A673 (cell line): ENCODE measurements at regions of chr6 and their contacts with region 1.

Region 1: DNA sequence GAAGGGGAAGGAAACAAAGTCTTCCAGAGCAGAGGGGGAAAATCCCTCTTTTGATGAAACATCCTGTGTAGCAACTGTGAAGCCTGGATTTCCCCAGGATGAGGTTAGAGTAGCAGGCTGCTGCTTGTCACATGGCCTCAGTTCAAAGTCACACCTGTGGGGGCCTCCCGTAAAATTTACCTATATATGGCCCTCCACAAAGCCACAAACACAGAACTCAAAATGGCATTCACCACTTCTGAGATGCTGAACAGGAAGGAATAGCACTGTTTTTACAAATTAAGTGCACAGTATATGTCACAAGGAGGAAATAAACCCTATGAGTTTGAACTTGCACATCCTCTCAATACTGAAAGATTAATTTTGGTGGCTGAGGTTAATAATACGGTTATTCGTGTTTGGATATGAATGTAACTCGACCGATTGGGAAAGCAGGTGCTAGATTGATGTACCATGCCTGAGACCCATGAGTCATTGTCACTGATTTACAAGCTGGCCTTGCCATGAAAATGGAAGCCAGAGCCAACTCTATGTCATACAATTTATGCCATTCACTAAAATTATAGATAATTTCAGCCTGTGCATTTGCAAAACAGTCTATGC is 70.6 kb downstream of the SGK1 start:
- DNase-seq: no peak
- H3K4me3 ChIP-seq: no peak overlapping the region
- H3K27ac ChIP-seq: no peak overlapping the region
- H3K4me1 ChIP-seq: no peaks in the 10 kb centered on the region
- H3K27me3 ChIP-seq: no peaks in the 10 kb centered on the region
- CTCF ChIP-seq: no peak

Region 2: GRCh38 chr6:134123666-134124208 is 123.6 kb before region 1 on chr6:
- CTCF ChIA-PET with region 1: no interaction called
- POLR2A ChIA-PET with region 1: interaction called, 11 read pairs
- intact Hi-C with region 1: no loop called
- DNase-seq: peak; percentile 64
- H3K4me3 ChIP-seq: no peak overlapping the region
- H3K27ac ChIP-seq: no peak overlapping the region
- H3K4me1 ChIP-seq: peaks cover 5% of the 10 kb centered on the region
- H3K27me3 ChIP-seq: no peaks in the 10 kb centered on the region
- CTCF ChIP-seq: peak; percentile 77

Region 3: DNA sequence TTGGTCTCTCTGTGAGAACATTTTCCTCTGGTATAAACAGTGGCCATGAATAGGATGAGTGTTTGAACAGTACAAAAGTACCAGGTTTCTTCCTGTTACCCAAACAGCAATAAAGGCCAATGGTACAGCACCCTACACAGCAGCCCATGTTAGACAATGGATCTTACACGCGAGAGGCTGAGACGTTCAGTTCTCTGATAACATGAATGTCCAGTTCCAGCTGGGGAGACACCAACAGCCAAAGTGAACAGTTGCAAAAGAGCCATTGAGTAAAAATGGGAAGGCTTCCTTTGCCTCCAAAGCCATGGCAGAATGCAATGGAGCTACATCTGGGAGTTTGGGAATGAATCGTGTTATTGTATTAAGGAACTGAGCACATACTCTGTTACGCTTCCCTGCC is 317.4 kb after region 1 on chr6:
- CTCF ChIA-PET with region 1: no interaction called
- POLR2A ChIA-PET with region 1: no interaction called
- intact Hi-C with region 1: no loop called
- DNase-seq: no peak
- H3K4me3 ChIP-seq: no peak overlapping the region
- H3K27ac ChIP-seq: no peak overlapping the region
- H3K4me1 ChIP-seq: no peaks in the 10 kb centered on the region
- H3K27me3 ChIP-seq: no peaks in the 10 kb centered on the region
- CTCF ChIP-seq: no peak